Activated T-helper 1 cell treated with anti-CD3 and anti-CD28 coated beads, Interleukin-12 subunit alpha, Interleukin-12 subunit beta, Interleukin-2, Interleukin-4 antibody, amounts not matched to agents 30 ng/mL and 10 ng/mL and 1 ng/mL, durations not matched to agents 14 hours and 24 hours and 36 hours (primary cell): ENCODE measurements at regions of chr21 and their contacts with region 1.

Region 1: DNA sequence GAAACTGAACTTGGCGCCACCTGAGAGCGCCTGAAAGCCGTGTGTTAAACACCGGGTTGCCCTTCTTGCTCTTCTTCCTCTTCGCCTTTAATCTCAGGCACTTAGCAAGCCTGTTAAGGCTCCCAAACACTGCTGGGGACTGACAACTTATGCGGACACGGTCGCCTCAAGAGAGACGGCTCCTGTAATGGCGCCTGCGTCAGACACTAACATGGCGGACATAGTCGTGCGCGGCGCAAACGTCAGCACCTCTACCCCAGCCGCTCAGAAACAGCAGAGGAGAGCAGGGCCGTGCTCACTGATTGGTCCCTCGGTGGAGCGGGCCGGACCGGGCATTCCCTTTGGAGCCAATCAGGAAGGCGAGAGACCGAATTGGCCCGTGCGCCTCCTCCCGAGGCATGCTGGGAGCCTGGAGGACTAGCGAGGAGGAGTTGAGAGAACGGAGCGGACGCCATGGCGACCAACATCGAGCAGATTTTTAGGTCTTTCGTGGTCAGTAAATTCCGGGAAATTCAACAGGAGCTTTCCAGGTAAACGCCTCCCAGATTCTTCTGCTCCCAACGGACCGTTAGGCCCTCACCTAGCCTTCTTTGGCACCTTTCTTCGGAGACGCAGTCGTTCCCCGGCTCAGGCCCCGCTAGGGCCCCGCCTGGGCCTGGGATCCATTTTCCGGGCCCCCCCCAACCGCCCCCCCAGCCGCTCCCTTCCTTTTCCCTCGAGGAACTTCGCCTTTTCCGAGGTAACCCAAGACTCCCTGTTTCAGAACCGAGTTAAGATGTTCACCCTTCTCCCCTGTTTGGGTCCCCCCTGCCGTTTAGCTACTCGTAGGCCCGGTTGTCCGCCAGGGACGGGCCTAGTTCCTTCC is at the start of gene SON:
- DNase-seq: peak; percentile 98
- H3K4me3 Mint-ChIP-seq: peak within 1 kb of the TSS; percentile 93
- H3K27ac Mint-ChIP-seq: peak within 1 kb of the TSS; percentile 99
- H3K4me1 Mint-ChIP-seq: peaks cover 43% of the 10 kb centered on the region
- H3K27me3 Mint-ChIP-seq: no peaks in the 10 kb centered on the region
- total RNA-seq, gene SON: 342 and 361 TPM in 2 replicates

Region 2: GRCh38 chr21:32612075-32612998 is 930.5 kb before region 1 on chr21 and contains the start of gene CFAP298:
- intact Hi-C with region 1: loop called (anchors 5 kb)
- DNase-seq: peak; percentile 84
- H3K4me3 Mint-ChIP-seq: peak within 1 kb of the TSS; percentile 96
- H3K27ac Mint-ChIP-seq: peak within 1 kb of the TSS; percentile 93
- H3K4me1 Mint-ChIP-seq: peaks cover 8% of the 10 kb centered on the region
- H3K27me3 Mint-ChIP-seq: peaks cover 4% of the 10 kb centered on the region
- total RNA-seq, gene CFAP298: 52.9 and 54.6 TPM in 2 replicates

Region 3: DNA sequence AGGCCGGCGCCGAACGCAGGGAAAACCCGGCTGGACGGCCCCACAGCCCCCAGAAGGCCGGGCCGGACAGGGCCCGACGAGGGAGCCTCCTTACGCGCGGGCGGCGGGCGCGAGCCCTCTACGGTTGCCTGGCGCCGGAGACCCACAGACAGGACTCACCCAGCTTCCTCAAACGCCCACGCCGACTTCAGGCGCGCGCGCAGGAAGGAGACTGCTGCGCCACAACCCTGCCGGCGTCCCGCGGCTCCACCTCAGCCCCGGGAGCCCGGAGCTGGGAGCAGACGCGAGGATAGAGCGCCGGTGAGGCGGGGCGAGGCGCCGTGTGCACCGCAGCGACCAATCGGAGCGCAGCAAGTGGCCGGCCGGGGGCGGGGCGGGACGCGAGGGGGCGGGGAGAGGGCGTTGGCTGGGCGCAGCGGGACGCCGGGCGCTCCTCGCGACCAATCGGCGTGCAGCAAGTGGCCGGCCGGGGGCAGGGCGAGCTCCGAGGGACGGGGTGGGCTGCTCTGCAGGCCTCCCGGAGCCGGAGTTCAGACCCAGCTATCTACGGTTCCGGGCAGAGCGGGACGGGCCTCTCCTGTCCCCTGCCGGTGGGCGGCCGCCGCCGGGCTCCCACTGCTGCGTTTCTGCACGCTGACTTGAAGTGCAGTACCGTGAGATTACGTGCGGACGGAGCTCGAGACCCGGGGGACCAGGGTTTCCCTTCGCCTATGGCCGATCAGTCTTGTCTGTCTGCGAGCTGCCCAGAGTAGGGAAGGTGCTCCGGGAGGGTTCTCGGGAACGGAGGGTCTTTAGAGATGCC is 63.0 kb before region 1 on chr21 and contains the start of gene TMEM50B:
- intact Hi-C with region 1: loop called (anchors 1 kb)
- DNase-seq: peak; percentile 93
- H3K4me3 Mint-ChIP-seq: peak within 1 kb of the TSS; percentile 88
- H3K27ac Mint-ChIP-seq: peak within 1 kb of the TSS; percentile 84
- H3K4me1 Mint-ChIP-seq: peaks cover 23% of the 10 kb centered on the region
- H3K27me3 Mint-ChIP-seq: peaks cover 6% of the 10 kb centered on the region
- total RNA-seq, gene TMEM50B: 12.0 and 14.0 TPM in 2 replicates

Region 4: DNA sequence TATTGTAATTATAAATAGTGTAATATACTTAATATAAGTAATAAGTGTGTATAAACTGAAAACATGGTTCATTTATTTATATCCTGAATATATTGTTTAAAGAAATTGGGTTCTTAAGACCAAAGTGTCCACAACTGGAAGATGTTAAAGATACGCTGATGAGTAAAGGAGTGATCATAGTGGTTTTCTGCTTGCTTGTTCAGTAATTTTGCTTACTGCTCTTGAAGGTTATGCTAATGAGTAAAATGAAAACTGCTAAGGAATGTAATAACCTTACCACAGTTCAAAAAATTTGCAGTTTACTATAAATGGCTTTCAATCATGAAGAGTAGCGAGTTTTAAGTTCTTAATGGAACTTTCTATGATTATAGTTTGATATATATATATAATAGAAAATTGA is 23.6 kb after region 1 on chr21:
- intact Hi-C with region 1: loop called (anchors 2 kb)
- DNase-seq: no peak
- H3K4me3 Mint-ChIP-seq: no peak overlapping the region
- H3K27ac Mint-ChIP-seq: no peak overlapping the region
- H3K4me1 Mint-ChIP-seq: peaks cover 22% of the 10 kb centered on the region
- H3K27me3 Mint-ChIP-seq: no peaks in the 10 kb centered on the region

Region 5: GRCh38 chr21:33598051-33598450 is 55.2 kb after region 1 on chr21:
- intact Hi-C with region 1: no loop called
- DNase-seq: no peak
- H3K4me3 Mint-ChIP-seq: no peak overlapping the region
- H3K27ac Mint-ChIP-seq: no peak overlapping the region
- H3K4me1 Mint-ChIP-seq: no peaks in the 10 kb centered on the region
- H3K27me3 Mint-ChIP-seq: no peaks in the 10 kb centered on the region

Region 6: DNA sequence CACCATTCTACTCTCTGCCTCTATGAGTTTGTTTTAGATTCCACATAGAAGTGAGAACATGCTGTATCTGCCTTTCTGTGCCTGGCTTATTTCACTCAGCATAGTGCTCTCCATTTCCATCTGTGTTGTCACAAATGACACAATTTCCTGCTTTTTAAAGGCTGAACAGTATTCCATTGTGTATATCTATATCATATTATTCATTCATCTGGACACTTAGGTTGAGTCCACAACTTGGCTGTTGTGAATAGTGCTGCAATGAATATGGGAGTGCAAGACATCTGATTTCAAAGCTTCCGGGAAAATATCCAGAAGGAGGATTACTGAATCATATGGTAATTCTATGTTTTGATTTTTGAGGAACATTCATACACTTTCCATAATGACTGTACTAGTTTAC is 65.7 kb after region 1 on chr21:
- intact Hi-C with region 1: loop called (anchors 2 kb)
- DNase-seq: no peak
- H3K4me3 Mint-ChIP-seq: no peak overlapping the region
- H3K27ac Mint-ChIP-seq: no peak overlapping the region
- H3K4me1 Mint-ChIP-seq: no peaks in the 10 kb centered on the region
- H3K27me3 Mint-ChIP-seq: no peaks in the 10 kb centered on the region